ENCODE measurements at regions of chr9 and their contacts with region 1.

Region 1: GRCh38 chr9:69672596-69673310 is 582 bp upstream of the APBA1 start:
- DNase-seq: peak; percentile 3
- ATAC-seq: peak; percentile 99
- H3K4me3 ChIP-seq: peak overlapping the region; percentile 47; the same call in 1 of the 2 replicates
- H3K27ac ChIP-seq: no peak overlapping the region
- H3K4me1 ChIP-seq: no peaks in the 10 kb centered on the region
- H3K27me3 ChIP-seq: peaks cover 4 to 6% of the 10 kb centered on the region in 2 experiments
- CTCF ChIP-seq: peak; percentile 75 to 84 (median 83)
- EP300 ChIP-seq: no peak
- POLR2A ChIP-seq: no peak
- RAD21 ChIP-seq: peak; percentile 62

Region 2: GRCh38 chr9:69759421-69760277 is 86.9 kb after region 1 on chr9 and contains the start of gene PTAR1:
- CTCF ChIA-PET with region 1: no interaction called
- POLR2A ChIA-PET with region 1: no interaction called
- RAD21 ChIA-PET with region 1: no interaction called
- SMC1A ChIA-PET with region 1: no interaction called
- in situ Hi-C with region 1: no loop called
- intact Hi-C with region 1: loop called (anchors 2 kb)
- DNase-seq: peak; percentile 35
- ATAC-seq: peak; percentile 86
- H3K4me3 ChIP-seq: peak within 1 kb of the TSS; percentile 92
- H3K27ac ChIP-seq: peak within 1 kb of the TSS; percentile 83
- H3K4me1 ChIP-seq: peaks cover 2% of the 10 kb centered on the region; the same call in 1 of the 2 replicates
- H3K27me3 ChIP-seq: no peaks in the 10 kb centered on the region
- CTCF ChIP-seq: no peak
- EP300 ChIP-seq: no peak
- POLR2A ChIP-seq: peak; percentile 98
- RAD21 ChIP-seq: no peak
- polyA plus RNA-seq, gene PTAR1: 4.9 to 6.6 TPM

Region 3: DNA sequence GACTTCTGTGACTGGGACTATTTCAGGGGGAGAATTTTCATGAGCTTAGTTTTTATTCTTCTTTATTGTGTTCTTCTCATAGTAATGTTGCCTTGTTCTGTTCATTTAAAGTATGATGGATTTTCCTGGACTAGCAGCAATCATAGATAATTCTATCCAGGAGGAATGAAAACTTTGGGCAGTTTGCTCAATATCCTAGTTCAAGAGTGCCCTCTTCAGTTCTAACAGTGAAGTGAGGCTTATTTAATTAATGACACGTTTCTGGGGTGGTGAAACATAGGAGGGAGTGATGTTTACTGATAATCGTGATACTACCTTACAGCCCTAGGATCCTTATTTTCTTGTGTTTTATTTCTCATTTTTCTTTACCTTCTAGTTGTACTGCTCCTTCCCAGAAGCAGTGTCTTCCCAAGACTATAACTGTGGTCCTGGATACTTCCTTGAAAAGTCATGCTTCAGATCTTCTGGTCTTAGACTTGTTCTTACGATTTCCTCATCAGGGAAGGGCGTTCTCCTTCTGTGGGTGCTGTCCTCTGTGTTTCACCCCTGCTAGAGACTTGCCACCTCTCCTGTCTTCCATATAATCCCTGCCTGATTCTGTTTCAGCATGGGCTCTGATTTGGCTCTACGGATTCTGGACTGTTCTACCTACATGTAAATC is 205.2 kb after region 1 on chr9:
- CTCF ChIA-PET with region 1: interaction called, 3 read pairs
- POLR2A ChIA-PET with region 1: no interaction called
- RAD21 ChIA-PET with region 1: no interaction called
- SMC1A ChIA-PET with region 1: interaction called, 3 read pairs
- in situ Hi-C with region 1: loop called (anchors 10 kb)
- intact Hi-C with region 1: loop called (anchors 1 kb)
- DNase-seq: no peak
- ATAC-seq: peak; percentile 57
- H3K4me3 ChIP-seq: no peak overlapping the region
- H3K27ac ChIP-seq: no peak overlapping the region
- H3K4me1 ChIP-seq: no peaks in the 10 kb centered on the region
- H3K27me3 ChIP-seq: no peaks in the 10 kb centered on the region
- CTCF ChIP-seq: peak; percentile 46 to 53 (median 53); a peak in 5 of 6 replicates
- EP300 ChIP-seq: no peak
- POLR2A ChIP-seq: no peak
- RAD21 ChIP-seq: peak; percentile 76

Region 4: DNA sequence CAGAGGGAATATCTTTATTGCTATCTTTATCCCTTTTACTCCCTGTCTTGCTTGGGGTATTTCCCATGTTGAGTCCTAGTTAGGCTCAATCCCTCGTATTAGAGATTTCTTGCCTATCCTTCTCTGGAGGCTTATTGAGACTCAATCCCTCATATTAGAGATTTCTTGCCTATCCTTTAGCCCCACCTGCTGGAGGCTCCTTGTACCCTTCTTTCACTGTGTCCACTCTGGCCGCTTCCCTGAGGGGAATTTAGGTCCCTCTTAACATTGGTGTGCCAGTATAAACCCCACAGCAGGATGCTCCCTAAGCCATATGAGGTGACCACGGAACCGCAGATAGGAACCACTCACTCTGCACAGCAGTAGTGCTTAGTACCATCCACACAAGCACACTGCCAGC is 260.1 kb after region 1 on chr9:
- CTCF ChIA-PET with region 1: no interaction called
- POLR2A ChIA-PET with region 1: no interaction called
- RAD21 ChIA-PET with region 1: no interaction called
- SMC1A ChIA-PET with region 1: no interaction called
- in situ Hi-C with region 1: no loop called
- intact Hi-C with region 1: loop called (anchors 2 kb)
- DNase-seq: no peak
- ATAC-seq: peak; percentile 64
- H3K4me3 ChIP-seq: no peak overlapping the region
- H3K27ac ChIP-seq: no peak overlapping the region
- H3K4me1 ChIP-seq: no peaks in the 10 kb centered on the region
- H3K27me3 ChIP-seq: no peaks in the 10 kb centered on the region
- CTCF ChIP-seq: peak; percentile 16 to 35 (median 28); a peak in 4 of 6 replicates
- EP300 ChIP-seq: no peak
- POLR2A ChIP-seq: no peak
- RAD21 ChIP-seq: peak; percentile 24; the same call in 1 of the 2 replicates